ENCODE measurements at regions of chr2 and their contacts with region 1.

Region 1: GRCh38 chr2:122710049-122710448 is 954.6 kb downstream of the TSN start:
- DNase-seq: no peak
- ATAC-seq: no peak
- H3K4me3 ChIP-seq: no peak overlapping the region
- H3K4me3 Mint-ChIP-seq: no peak overlapping the region
- H3K27ac ChIP-seq: no peak overlapping the region
- H3K27ac Mint-ChIP-seq: no peak overlapping the region
- H3K4me1 ChIP-seq: no peaks in the 10 kb centered on the region
- H3K4me1 Mint-ChIP-seq: no peaks in the 10 kb centered on the region
- H3K27me3 ChIP-seq: no peaks in the 10 kb centered on the region
- H3K27me3 Mint-ChIP-seq: no peaks in the 10 kb centered on the region
- CTCF ChIP-seq: no peak

Region 2: DNA sequence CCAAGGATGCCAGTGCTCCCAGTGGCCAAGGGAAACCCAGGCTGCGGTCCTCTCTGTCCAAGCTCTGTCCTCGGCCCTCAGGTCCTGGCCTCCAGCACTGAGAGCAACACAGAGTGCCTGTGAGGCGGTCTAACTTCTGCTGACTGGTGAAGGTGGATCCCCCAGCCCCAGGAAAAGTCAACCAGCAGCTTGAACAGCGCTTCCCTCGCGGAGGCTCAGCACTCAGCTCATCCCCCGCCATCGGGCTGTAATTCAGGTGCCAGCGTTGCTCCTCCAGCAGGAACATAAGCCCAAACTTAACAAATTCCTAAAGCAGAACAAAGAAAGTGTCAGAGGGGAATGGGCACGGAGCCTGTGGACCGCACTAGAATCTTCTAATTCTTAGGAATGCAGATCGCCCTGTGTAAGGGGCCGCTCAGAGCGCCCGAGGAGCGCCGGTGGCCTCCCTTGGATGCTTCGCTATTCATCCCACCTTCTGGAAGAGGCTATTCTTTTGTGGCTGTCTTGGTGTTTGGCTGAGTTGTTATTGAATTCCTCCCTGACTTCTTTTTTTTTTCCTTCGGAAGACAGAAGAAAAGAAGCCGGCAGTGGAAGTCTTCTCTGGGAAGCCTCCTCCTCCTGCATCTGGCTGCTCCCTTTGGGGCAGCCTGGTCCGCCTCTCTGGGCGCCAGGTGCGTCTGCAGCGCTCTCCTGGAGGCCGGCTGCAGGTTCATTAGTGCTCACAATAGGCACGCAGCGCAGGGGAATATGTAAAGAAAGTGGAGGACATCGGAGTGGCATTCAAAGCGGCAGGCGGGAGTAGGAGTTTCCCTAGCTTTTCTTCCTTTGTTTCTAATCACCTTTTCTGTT is 49.0 kb before region 1 on chr2:
- CTCF ChIA-PET with region 1: no interaction called
- POLR2A ChIA-PET with region 1: no interaction called
- intact Hi-C with region 1: no loop called
- DNase-seq: no peak
- ATAC-seq: no peak
- H3K4me3 ChIP-seq: no peak overlapping the region
- H3K4me3 Mint-ChIP-seq: no peak overlapping the region
- H3K27ac ChIP-seq: no peak overlapping the region
- H3K27ac Mint-ChIP-seq: no peak overlapping the region
- H3K4me1 ChIP-seq: no peaks in the 10 kb centered on the region
- H3K4me1 Mint-ChIP-seq: no peaks in the 10 kb centered on the region
- H3K27me3 ChIP-seq: no peaks in the 10 kb centered on the region
- H3K27me3 Mint-ChIP-seq: no peaks in the 10 kb centered on the region
- CTCF ChIP-seq: no peak

Region 3: GRCh38 chr2:122736279-122736678 is 26.2 kb after region 1 on chr2:
- CTCF ChIA-PET with region 1: interaction called, 3 read pairs
- POLR2A ChIA-PET with region 1: no interaction called
- intact Hi-C with region 1: loop called in 1 of 2 experiments (anchors 2 kb)
- DNase-seq: no peak
- ATAC-seq: no peak
- H3K4me3 ChIP-seq: no peak overlapping the region
- H3K4me3 Mint-ChIP-seq: no peak overlapping the region
- H3K27ac ChIP-seq: no peak overlapping the region
- H3K27ac Mint-ChIP-seq: no peak overlapping the region
- H3K4me1 ChIP-seq: no peaks in the 10 kb centered on the region
- H3K4me1 Mint-ChIP-seq: no peaks in the 10 kb centered on the region
- H3K27me3 ChIP-seq: no peaks in the 10 kb centered on the region
- H3K27me3 Mint-ChIP-seq: no peaks in the 10 kb centered on the region
- CTCF ChIP-seq: no peak

Region 4: DNA sequence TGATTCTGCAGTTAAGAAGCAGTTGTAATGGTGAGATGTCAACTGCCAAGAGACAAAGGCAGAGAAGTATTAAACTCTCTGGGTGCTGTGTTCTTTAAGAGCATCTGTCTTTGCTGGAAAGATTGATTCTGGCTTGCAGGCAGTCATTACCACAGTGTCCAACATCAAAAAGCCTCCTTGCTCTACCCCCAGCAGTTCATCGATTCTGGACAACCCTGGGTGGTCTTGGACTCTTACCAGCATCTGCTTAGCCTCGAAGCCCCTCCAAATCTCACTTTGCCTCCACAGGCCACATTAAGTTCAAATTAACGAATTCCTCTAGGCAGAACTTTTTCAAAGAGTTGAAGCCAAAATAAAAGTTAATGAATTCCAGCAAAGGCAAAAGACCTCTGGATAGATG is 106.8 kb after region 1 on chr2:
- CTCF ChIA-PET with region 1: no interaction called
- POLR2A ChIA-PET with region 1: no interaction called
- intact Hi-C with region 1: no loop called
- DNase-seq: no peak
- ATAC-seq: no peak
- H3K4me3 ChIP-seq: no peak overlapping the region
- H3K4me3 Mint-ChIP-seq: no peak overlapping the region
- H3K27ac ChIP-seq: no peak overlapping the region
- H3K27ac Mint-ChIP-seq: no peak overlapping the region
- H3K4me1 ChIP-seq: no peaks in the 10 kb centered on the region
- H3K4me1 Mint-ChIP-seq: no peaks in the 10 kb centered on the region
- H3K27me3 ChIP-seq: no peaks in the 10 kb centered on the region
- H3K27me3 Mint-ChIP-seq: no peaks in the 10 kb centered on the region
- CTCF ChIP-seq: no peak